Activated CD4-positive, alpha-beta T cell treated with anti-CD3 and anti-CD28 coated beads for 36 hours (primary cell): ENCODE measurements at regions of chr9 and their contacts with region 1.

Region 1: GRCh38 chr9:6412487-6413364 is at the start of gene UHRF2:
- DNase-seq: peak; percentile 100
- ATAC-seq: peak; percentile 91
- H3K4me3 Mint-ChIP-seq: peak within 1 kb of the TSS; percentile 83
- H3K27ac Mint-ChIP-seq: peak within 1 kb of the TSS; percentile 93
- H3K4me1 Mint-ChIP-seq: peaks cover 32% of the 10 kb centered on the region
- H3K27me3 Mint-ChIP-seq: peaks cover 6% of the 10 kb centered on the region
- total RNA-seq, gene UHRF2: 63.7 to 70.9 TPM

Region 2: GRCh38 chr9:4792572-4793458 is 1619.9 kb before region 1 on chr9 and contains the start of gene RCL1:
- CTCF ChIA-PET with region 1: no interaction called
- POLR2A ChIA-PET with region 1: no interaction called
- intact Hi-C with region 1: loop called in 1 of 2 experiments (anchors 2 kb)
- DNase-seq: peak; percentile 98
- ATAC-seq: peak; percentile 96
- H3K4me3 Mint-ChIP-seq: peak within 1 kb of the TSS; percentile 97
- H3K27ac Mint-ChIP-seq: peak within 1 kb of the TSS; percentile 89
- H3K4me1 Mint-ChIP-seq: peaks cover 44% of the 10 kb centered on the region
- H3K27me3 Mint-ChIP-seq: no peaks in the 10 kb centered on the region
- total RNA-seq, gene RCL1: 27.0 to 36.4 TPM

Region 3: GRCh38 chr9:6008169-6008979 is 404.4 kb before region 1 on chr9:
- CTCF ChIA-PET with region 1: interaction called, 4 read pairs
- POLR2A ChIA-PET with region 1: interaction called, 4 read pairs
- intact Hi-C with region 1: loop called in 1 of 2 experiments (anchors 2 kb)
- DNase-seq: peak; percentile 96
- ATAC-seq: peak; percentile 77
- H3K4me3 Mint-ChIP-seq: peak overlapping the region; percentile 88
- H3K27ac Mint-ChIP-seq: peak overlapping the region; percentile 84
- H3K4me1 Mint-ChIP-seq: peaks cover 61% of the 10 kb centered on the region
- H3K27me3 Mint-ChIP-seq: no peaks in the 10 kb centered on the region

Region 4: GRCh38 chr9:6353851-6354686 is 58.7 kb before region 1 on chr9:
- CTCF ChIA-PET with region 1: interaction called, 7 read pairs
- POLR2A ChIA-PET with region 1: interaction called, 3 read pairs
- intact Hi-C with region 1: loop called (anchors 1 to 2 kb)
- DNase-seq: peak; percentile 27
- ATAC-seq: peak; percentile 89
- H3K4me3 Mint-ChIP-seq: no peak overlapping the region
- H3K27ac Mint-ChIP-seq: peak overlapping the region; percentile 37
- H3K4me1 Mint-ChIP-seq: peaks cover 18% of the 10 kb centered on the region
- H3K27me3 Mint-ChIP-seq: peaks cover 4% of the 10 kb centered on the region

Region 5: DNA sequence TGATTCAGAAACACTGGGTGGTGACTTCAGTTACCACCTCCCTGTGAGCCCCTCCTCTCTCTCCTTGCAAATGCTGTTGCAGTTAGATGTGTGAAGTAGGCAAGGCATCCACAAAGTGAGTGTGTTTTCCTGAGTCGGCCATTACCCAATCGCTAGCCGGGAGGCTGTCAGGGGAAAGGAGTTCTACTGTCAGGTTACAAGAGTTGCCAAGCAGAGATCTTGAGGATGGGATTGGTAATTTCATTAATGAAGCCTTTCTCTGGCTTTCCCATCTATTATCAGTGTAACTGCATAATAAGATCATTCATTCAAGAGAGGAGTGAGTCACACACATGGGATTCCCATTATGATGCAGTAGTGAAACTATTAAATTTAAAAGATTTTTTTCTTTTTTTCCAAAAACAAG is 125.9 kb after region 1 on chr9:
- CTCF ChIA-PET with region 1: no interaction called
- POLR2A ChIA-PET with region 1: no interaction called
- intact Hi-C with region 1: no loop called
- DNase-seq: no peak
- ATAC-seq: peak; percentile 63
- H3K4me3 Mint-ChIP-seq: no peak overlapping the region
- H3K27ac Mint-ChIP-seq: no peak overlapping the region
- H3K4me1 Mint-ChIP-seq: peaks cover 5% of the 10 kb centered on the region
- H3K27me3 Mint-ChIP-seq: peaks cover 8% of the 10 kb centered on the region

Region 6: GRCh38 chr9:6566409-6567139 is 153.8 kb after region 1 on chr9:
- CTCF ChIA-PET with region 1: interaction called, 8 read pairs
- POLR2A ChIA-PET with region 1: interaction called, 7 read pairs
- intact Hi-C with region 1: loop called (anchors 1 to 2 kb)
- DNase-seq: peak; percentile 74
- ATAC-seq: peak; percentile 84
- H3K4me3 Mint-ChIP-seq: peak overlapping the region; percentile 44
- H3K27ac Mint-ChIP-seq: peak overlapping the region; percentile 87
- H3K4me1 Mint-ChIP-seq: peaks cover 21% of the 10 kb centered on the region
- H3K27me3 Mint-ChIP-seq: peaks cover 5% of the 10 kb centered on the region

Region 7: GRCh38 chr9:6757456-6758247 is 344.9 kb after region 1 on chr9 and contains the start of gene KDM4C:
- CTCF ChIA-PET with region 1: interaction called, 3 read pairs
- POLR2A ChIA-PET with region 1: interaction called, 16 read pairs
- intact Hi-C with region 1: loop called (anchors 1 kb)
- DNase-seq: peak; percentile 97
- ATAC-seq: peak; percentile 84
- H3K4me3 Mint-ChIP-seq: peak within 1 kb of the TSS; percentile 87
- H3K27ac Mint-ChIP-seq: peak within 1 kb of the TSS; percentile 99
- H3K4me1 Mint-ChIP-seq: peaks cover 26% of the 10 kb centered on the region
- H3K27me3 Mint-ChIP-seq: no peaks in the 10 kb centered on the region
- total RNA-seq, gene KDM4C: 31.7 to 33.1 TPM